ENCODE measurements at regions of chr20 and their contacts with region 1.

Region 1: GRCh38 chr20:49610701-49611538 is 43.0 kb upstream of the PTGIS start:
- DNase-seq: peak; percentile 72
- ATAC-seq: peak; percentile 85
- H3K4me3 ChIP-seq: peak overlapping the region; percentile 22 to 27; a peak in 3 of 4 replicates
- H3K27ac ChIP-seq: no peak overlapping the region; the same call in 1 of the 2 replicates
- H3K4me1 ChIP-seq: peaks cover 6 to 26% of the 10 kb centered on the region in 2 experiments; a peak in 3 of 4 replicates
- H3K27me3 ChIP-seq: no peaks in the 10 kb centered on the region
- CTCF ChIP-seq: peak; percentile 92 to 99 (median 98)
- POLR2A ChIP-seq: no peak
- RAD21 ChIP-seq: peak; percentile 100

Region 2: GRCh38 chr20:49338061-49338460 is 272.9 kb before region 1 on chr20:
- CTCF ChIA-PET with region 1: interaction called, 6 read pairs
- POLR2A ChIA-PET with region 1: no interaction called
- RAD21 ChIA-PET with region 1: no interaction called
- intact Hi-C with region 1: loop called (anchors 1 kb)
- DNase-seq: no peak
- ATAC-seq: no peak
- H3K4me3 ChIP-seq: no peak overlapping the region
- H3K27ac ChIP-seq: no peak overlapping the region
- H3K4me1 ChIP-seq: no peaks in the 10 kb centered on the region
- H3K27me3 ChIP-seq: no peaks in the 10 kb centered on the region
- CTCF ChIP-seq: no peak
- POLR2A ChIP-seq: no peak
- RAD21 ChIP-seq: no peak

Region 3: DNA sequence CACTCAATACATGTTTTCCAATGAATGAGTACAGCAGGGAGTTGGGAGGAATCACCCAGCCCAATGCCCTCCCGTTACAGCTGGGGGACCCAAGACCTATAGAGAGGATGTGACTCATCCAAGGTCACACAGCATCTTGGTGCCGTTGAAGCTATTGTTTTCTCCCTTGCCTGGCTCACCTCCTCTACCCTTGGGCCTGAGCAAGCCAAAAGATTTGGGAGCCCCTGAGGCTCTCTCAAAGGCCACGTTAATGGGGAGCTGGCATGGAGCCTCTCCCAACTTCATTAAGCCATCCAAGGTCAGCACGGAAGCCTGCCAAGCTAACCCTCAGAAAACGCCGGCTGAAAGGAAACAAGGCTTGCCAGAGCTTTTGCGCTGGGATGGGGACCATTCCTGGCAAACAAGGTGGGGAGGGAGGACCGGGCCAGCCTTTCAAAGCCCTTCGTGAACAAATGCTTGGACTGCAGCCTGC is 158.9 kb before region 1 on chr20:
- CTCF ChIA-PET with region 1: no interaction called
- POLR2A ChIA-PET with region 1: no interaction called
- RAD21 ChIA-PET with region 1: no interaction called
- intact Hi-C with region 1: no loop called
- DNase-seq: no peak
- ATAC-seq: no peak
- H3K4me3 ChIP-seq: no peak overlapping the region
- H3K27ac ChIP-seq: no peak overlapping the region
- H3K4me1 ChIP-seq: peaks cover 0 to 10% of the 10 kb centered on the region in 2 experiments; a peak in 2 of 4 replicates
- H3K27me3 ChIP-seq: 0 out of 2 replicates have a peak, but pooled peaks cover 10% of the 10 kb centered on the region
- CTCF ChIP-seq: no peak
- POLR2A ChIP-seq: no peak
- RAD21 ChIP-seq: no peak

Region 4: GRCh38 chr20:49713753-49714712 is 103.1 kb after region 1 on chr20 and contains the start of gene B4GALT5:
- CTCF ChIA-PET with region 1: interaction called, 3 read pairs
- POLR2A ChIA-PET with region 1: no interaction called
- RAD21 ChIA-PET with region 1: interaction called in 1 of 2 experiments, 3 read pairs
- intact Hi-C with region 1: loop called (anchors 5 kb)
- DNase-seq: peak; percentile 80
- ATAC-seq: peak; percentile 76
- H3K4me3 ChIP-seq: peak within 1 kb of the TSS; percentile 79 to 83
- H3K27ac ChIP-seq: peak within 1 kb of the TSS; percentile 95
- H3K4me1 ChIP-seq: peaks cover 42 to 50% of the 10 kb centered on the region in 2 experiments
- H3K27me3 ChIP-seq: no peaks in the 10 kb centered on the region
- CTCF ChIP-seq: no peak
- POLR2A ChIP-seq: peak; percentile 56
- RAD21 ChIP-seq: 0 out of 2 replicates have a peak, but pooled peaks have one; percentile 31
- total RNA-seq, gene B4GALT5: 92.5 TPM

Region 5: DNA sequence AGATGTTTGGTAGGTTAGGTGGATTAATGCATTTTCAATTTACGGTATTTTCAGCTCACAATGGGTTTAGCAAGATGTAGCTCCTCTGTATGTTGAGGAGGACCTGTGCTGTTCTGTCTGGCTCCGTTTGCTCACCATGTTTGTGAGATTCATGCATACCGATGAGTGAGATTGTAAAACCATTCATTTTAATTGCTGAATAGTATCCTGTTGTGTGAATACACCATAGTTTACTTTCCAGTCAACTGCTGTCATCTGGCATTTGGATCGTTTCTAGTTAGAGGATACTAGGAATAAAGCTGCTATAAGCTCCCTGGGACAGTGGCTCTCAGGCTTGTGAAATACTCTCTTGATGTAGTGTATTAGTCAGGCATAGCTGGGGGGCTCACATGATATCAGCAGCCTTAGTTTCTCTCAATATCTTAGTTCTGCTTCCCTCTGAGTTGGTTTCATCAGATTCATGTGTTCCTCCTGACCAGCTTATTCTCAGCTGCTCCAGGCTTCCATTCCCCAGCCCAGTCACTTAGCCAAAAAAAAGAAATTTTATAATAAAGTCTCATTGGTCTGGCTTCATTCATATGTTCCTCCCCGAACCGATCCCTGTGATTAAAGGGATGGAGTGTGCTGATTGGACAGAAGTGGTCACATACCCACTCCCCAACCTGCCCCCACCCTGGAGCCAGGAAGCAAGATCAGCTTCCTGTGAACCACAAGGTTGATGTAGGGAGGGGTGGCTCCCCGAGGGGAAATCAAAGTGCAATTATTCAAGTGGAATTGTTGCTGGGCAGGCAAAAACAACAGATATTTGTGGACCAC is 113.7 kb after region 1 on chr20:
- CTCF ChIA-PET with region 1: no interaction called
- POLR2A ChIA-PET with region 1: no interaction called
- RAD21 ChIA-PET with region 1: no interaction called
- intact Hi-C with region 1: no loop called
- DNase-seq: no peak
- ATAC-seq: no peak
- H3K4me3 ChIP-seq: no peak overlapping the region
- H3K27ac ChIP-seq: no peak overlapping the region
- H3K4me1 ChIP-seq: no peaks in the 10 kb centered on the region
- H3K27me3 ChIP-seq: no peaks in the 10 kb centered on the region
- CTCF ChIP-seq: no peak
- POLR2A ChIP-seq: no peak
- RAD21 ChIP-seq: no peak

Region 6: DNA sequence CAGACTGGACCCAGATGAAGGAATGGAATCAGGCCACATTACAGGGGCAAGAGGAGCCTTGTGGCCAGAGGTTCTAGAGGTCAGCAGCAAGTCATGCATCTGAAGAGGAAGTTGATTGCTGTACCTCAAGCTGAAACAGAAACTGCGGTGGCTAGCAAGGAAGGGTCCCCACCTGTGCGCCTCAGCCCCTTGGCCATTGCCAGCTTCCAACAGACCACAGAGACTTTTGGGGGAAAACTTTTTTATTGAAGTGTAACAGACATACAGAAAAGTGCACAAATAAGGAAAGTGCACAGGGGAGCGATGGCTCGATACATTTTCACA is 174.9 kb after region 1 on chr20:
- CTCF ChIA-PET with region 1: interaction called, 7 read pairs
- POLR2A ChIA-PET with region 1: no interaction called
- RAD21 ChIA-PET with region 1: no interaction called
- intact Hi-C with region 1: loop called (anchors 1 kb)
- DNase-seq: no peak
- ATAC-seq: no peak
- H3K4me3 ChIP-seq: no peak overlapping the region
- H3K27ac ChIP-seq: no peak overlapping the region
- H3K4me1 ChIP-seq: peaks cover 0 to 14% of the 10 kb centered on the region in 2 experiments; a peak in 3 of 4 replicates
- H3K27me3 ChIP-seq: no peaks in the 10 kb centered on the region
- CTCF ChIP-seq: no peak
- POLR2A ChIP-seq: no peak
- RAD21 ChIP-seq: no peak

Region 7: DNA sequence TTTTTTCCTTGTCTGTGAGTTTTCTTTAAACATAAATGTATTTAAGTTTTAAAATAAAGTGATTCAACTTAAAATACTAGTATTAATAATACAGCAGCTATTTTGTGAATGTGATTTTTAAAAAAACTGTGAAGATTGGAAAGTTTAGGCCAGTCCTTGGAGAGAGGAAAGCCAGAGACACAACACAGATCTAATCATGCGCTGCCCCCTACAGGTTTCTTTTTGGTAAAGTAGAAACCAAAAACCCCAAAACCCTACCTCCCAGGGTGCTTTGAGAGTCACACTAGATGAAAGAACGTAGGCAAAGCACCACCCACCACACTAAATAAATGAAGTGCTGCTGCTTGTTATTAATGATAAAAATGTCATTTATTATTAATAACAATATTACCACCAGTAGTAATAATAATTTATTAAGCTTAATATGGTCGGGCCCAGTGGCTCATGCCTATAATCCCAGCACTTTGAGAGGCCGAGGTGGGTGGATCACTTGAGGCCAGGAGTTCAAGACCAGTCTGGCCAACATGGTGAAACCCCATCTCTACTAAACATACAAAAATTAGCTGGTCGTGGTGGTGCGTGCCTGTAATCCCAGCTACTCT is 235.4 kb after region 1 on chr20:
- CTCF ChIA-PET with region 1: interaction called, 43 read pairs
- POLR2A ChIA-PET with region 1: no interaction called
- RAD21 ChIA-PET with region 1: interaction called in 1 of 2 experiments, 4 read pairs
- intact Hi-C with region 1: loop called (anchors 1 kb)
- DNase-seq: peak; percentile 16
- ATAC-seq: peak; percentile 90
- H3K4me3 ChIP-seq: no peak overlapping the region
- H3K27ac ChIP-seq: no peak overlapping the region
- H3K4me1 ChIP-seq: no peaks in the 10 kb centered on the region
- H3K27me3 ChIP-seq: no peaks in the 10 kb centered on the region
- CTCF ChIP-seq: peak; percentile 51 to 82 (median 65)
- POLR2A ChIP-seq: no peak
- RAD21 ChIP-seq: peak; percentile 82

Region 8: GRCh38 chr20:49888345-49888966 is 277.5 kb after region 1 on chr20:
- CTCF ChIA-PET with region 1: interaction called, 43 read pairs
- POLR2A ChIA-PET with region 1: no interaction called
- RAD21 ChIA-PET with region 1: interaction called, 3 to 4 read pairs
- intact Hi-C with region 1: loop called (anchors 1 kb)
- DNase-seq: peak; percentile 21
- ATAC-seq: peak; percentile 84
- H3K4me3 ChIP-seq: no peak overlapping the region
- H3K27ac ChIP-seq: no peak overlapping the region
- H3K4me1 ChIP-seq: peaks cover 0 to 5% of the 10 kb centered on the region in 2 experiments; a peak in 1 of 4 replicates
- H3K27me3 ChIP-seq: no peaks in the 10 kb centered on the region
- CTCF ChIP-seq: peak; percentile 83 to 96 (median 86)
- POLR2A ChIP-seq: no peak
- RAD21 ChIP-seq: peak; percentile 82

Region 9: DNA sequence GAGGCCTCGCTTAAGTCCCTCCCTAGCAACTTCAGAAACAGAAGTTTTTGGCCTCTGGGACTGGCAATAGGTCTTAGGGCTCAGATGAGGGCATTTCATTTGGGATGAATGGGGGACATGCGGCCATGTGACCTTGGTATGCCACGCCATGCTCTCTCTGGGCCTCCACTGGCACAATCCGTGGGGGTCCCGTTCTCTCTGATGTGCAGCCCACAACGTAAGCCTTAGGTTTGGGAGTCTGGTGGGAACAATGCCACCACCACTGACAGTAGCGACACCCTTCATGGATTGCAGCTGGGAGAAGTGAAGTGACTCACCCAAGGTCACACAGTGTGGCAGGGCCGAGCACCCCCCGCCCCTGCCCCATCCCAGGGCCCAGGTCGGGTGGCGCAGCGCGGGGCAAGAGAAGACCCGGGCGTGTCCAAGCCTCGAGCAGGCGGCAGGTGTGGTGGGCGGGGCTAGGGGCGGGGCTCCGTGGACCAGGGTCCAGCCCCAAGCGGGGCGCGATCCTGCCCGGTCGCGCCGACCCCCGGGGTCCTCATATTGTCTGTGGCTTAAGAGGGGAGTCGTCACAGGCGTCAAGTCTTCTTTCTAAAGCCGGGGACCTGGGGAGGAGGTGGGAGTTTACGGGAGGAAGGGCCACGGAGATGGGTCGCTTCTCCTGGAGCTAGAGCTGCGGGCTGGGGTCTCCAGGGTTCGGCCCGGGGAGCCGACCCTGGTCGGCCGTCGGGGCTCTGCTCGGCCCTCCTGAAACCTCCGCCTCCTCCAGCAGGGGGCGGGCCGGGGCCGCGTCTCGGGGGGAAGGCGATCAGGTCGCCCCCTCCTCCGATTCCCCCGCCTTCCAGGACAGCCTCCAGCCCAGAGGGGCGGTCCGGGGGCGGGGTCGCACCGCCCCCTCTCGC is 579.0 kb after region 1 on chr20:
- CTCF ChIA-PET with region 1: no interaction called
- POLR2A ChIA-PET with region 1: no interaction called
- RAD21 ChIA-PET with region 1: no interaction called
- intact Hi-C with region 1: no loop called
- DNase-seq: peak; percentile 57
- ATAC-seq: peak; percentile 64
- H3K4me3 ChIP-seq: peak overlapping the region; percentile 68 to 91
- H3K27ac ChIP-seq: peak overlapping the region; percentile 85; the same call in 1 of the 2 replicates
- H3K4me1 ChIP-seq: peaks cover 38 to 60% of the 10 kb centered on the region in 2 experiments
- H3K27me3 ChIP-seq: no peaks in the 10 kb centered on the region
- CTCF ChIP-seq: peak in 2 of 3 experiments; percentile 54 to 60; a peak in 4 of 6 replicates
- POLR2A ChIP-seq: no peak
- RAD21 ChIP-seq: no peak

Measured in HCT116 (cell line).